ENCODE measurements at regions of chr17 and their contacts with region 1.

Region 1: GRCh38 chr17:44141717-44142285 is at the start of gene HROB:
- DNase-seq: peak; percentile 96 to 100 (median 98)
- ATAC-seq: peak; percentile 98
- H3K4me3 ChIP-seq: peak within 1 kb of the TSS; percentile 84
- H3K4me3 Mint-ChIP-seq: peak within 1 kb of the TSS; percentile 82 to 89 (median 84)
- H3K27ac ChIP-seq: peak within 1 kb of the TSS; percentile 84
- H3K27ac Mint-ChIP-seq: peak within 1 kb of the TSS; percentile 65 to 91 (median 87)
- H3K4me1 ChIP-seq: peaks cover 0 to 9% of the 10 kb centered on the region in 2 donors
- H3K4me1 Mint-ChIP-seq: peaks cover 0 to 32% (median 12%) of the 10 kb centered on the region in 7 donors
- H3K27me3 ChIP-seq: no peaks in the 10 kb centered on the region
- H3K27me3 Mint-ChIP-seq: peaks cover 0 to 5% (median 0%) of the 10 kb centered on the region in 5 donors
- total RNA-seq, gene HROB: 0.76 to 12.3 (median 2.1) TPM

Region 2: GRCh38 chr17:44006598-44007345 is 135.0 kb before region 1 on chr17:
- CTCF ChIA-PET with region 1: no interaction called
- POLR2A ChIA-PET with region 1: no interaction called
- intact Hi-C with region 1: loop called in 1 of 2 experiments (anchors 1 kb)
- DNase-seq: peak; percentile 77 to 95 (median 86)
- ATAC-seq: peak; percentile 96
- H3K4me3 ChIP-seq: peak overlapping the region; percentile 89
- H3K4me3 Mint-ChIP-seq: peak overlapping the region; percentile 86 to 94 (median 90)
- H3K27ac ChIP-seq: peak overlapping the region; percentile 60
- H3K27ac Mint-ChIP-seq: peak overlapping the region; percentile 44 to 88 (median 68)
- H3K4me1 ChIP-seq: peaks cover 19 to 26% of the 10 kb centered on the region in 2 donors
- H3K4me1 Mint-ChIP-seq: peaks cover 16 to 30% (median 25%) of the 10 kb centered on the region in 7 donors
- H3K27me3 ChIP-seq: no peaks in the 10 kb centered on the region
- H3K27me3 Mint-ChIP-seq: peaks cover 0 to 30% (median 4%) of the 10 kb centered on the region in 5 donors

Region 3: GRCh38 chr17:44070455-44071197 is 71.2 kb before region 1 on chr17 and contains the start of gene G6PC3:
- CTCF ChIA-PET with region 1: no interaction called
- POLR2A ChIA-PET with region 1: no interaction called
- intact Hi-C with region 1: loop called (anchors 1 kb)
- DNase-seq: peak; percentile 35 to 86 (median 49)
- ATAC-seq: peak; percentile 67
- H3K4me3 ChIP-seq: peak within 1 kb of the TSS; percentile 75
- H3K4me3 Mint-ChIP-seq: peak within 1 kb of the TSS; percentile 91 to 97 (median 94)
- H3K27ac ChIP-seq: peak within 1 kb of the TSS; percentile 83
- H3K27ac Mint-ChIP-seq: peak within 1 kb of the TSS; percentile 29 to 96 (median 93)
- H3K4me1 ChIP-seq: peaks cover 21 to 24% of the 10 kb centered on the region in 2 donors
- H3K4me1 Mint-ChIP-seq: peaks cover 31 to 49% (median 36%) of the 10 kb centered on the region in 7 donors
- H3K27me3 ChIP-seq: no peaks in the 10 kb centered on the region
- H3K27me3 Mint-ChIP-seq: no peaks in the 10 kb centered on the region
- total RNA-seq, gene G6PC3: 9.4 to 25.8 (median 13.9) TPM

Region 4: DNA sequence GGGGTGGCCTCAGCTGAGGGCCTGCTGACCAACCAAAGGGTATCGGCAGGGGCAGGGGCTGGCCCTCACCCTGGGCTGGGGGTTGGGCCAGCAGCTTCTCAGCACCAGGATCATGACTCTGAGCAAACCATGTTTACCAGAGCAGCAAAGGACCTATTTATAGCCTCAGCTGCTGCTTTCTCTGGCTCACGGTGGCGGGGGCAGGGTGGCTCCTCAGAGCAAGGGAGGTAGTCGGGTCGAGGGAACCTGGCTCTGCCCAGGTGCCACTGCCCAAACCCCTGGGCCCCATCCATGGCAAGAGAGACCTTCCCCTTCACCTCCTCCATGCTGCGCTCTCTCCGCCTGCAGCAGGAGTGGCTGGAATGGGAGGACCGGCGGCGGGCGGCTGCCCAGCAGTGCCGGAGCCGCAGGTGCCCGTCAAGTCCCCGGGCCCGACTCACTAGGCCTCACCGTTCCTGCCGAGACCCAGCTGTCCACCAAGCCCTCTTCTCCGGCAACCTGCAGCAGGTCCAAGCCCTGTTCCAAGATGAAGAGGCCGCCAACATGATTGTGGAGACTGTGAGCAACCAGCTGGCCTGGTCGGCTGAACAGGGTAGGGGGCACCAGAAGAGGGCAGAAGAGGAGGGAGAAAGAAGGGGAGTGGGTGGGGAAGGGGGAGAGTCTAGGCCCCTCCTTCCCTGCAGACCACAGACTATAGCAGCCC is 28.8 kb after region 1 on chr17 and contains the start of gene ASB16:
- CTCF ChIA-PET with region 1: interaction called, 5 read pairs
- POLR2A ChIA-PET with region 1: no interaction called
- intact Hi-C with region 1: loop called (anchors 1 kb)
- DNase-seq: no peak
- ATAC-seq: no peak
- H3K4me3 ChIP-seq: no peak within 1 kb of the TSS
- H3K4me3 Mint-ChIP-seq: no peak within 1 kb of the TSS
- H3K27ac ChIP-seq: no peak within 1 kb of the TSS
- H3K27ac Mint-ChIP-seq: peak within 1 kb of the TSS in 2 of 9 donors; percentile 46 to 76
- H3K4me1 ChIP-seq: peaks cover 0 to 4% of the 10 kb centered on the region in 2 donors
- H3K4me1 Mint-ChIP-seq: peaks cover 7 to 21% (median 14%) of the 10 kb centered on the region in 7 donors
- H3K27me3 ChIP-seq: no peaks in the 10 kb centered on the region
- H3K27me3 Mint-ChIP-seq: no peaks in the 10 kb centered on the region
- total RNA-seq, gene ASB16: 0.34 TPM in 1 of 5 experiments, not detected in the others

Region 5: DNA sequence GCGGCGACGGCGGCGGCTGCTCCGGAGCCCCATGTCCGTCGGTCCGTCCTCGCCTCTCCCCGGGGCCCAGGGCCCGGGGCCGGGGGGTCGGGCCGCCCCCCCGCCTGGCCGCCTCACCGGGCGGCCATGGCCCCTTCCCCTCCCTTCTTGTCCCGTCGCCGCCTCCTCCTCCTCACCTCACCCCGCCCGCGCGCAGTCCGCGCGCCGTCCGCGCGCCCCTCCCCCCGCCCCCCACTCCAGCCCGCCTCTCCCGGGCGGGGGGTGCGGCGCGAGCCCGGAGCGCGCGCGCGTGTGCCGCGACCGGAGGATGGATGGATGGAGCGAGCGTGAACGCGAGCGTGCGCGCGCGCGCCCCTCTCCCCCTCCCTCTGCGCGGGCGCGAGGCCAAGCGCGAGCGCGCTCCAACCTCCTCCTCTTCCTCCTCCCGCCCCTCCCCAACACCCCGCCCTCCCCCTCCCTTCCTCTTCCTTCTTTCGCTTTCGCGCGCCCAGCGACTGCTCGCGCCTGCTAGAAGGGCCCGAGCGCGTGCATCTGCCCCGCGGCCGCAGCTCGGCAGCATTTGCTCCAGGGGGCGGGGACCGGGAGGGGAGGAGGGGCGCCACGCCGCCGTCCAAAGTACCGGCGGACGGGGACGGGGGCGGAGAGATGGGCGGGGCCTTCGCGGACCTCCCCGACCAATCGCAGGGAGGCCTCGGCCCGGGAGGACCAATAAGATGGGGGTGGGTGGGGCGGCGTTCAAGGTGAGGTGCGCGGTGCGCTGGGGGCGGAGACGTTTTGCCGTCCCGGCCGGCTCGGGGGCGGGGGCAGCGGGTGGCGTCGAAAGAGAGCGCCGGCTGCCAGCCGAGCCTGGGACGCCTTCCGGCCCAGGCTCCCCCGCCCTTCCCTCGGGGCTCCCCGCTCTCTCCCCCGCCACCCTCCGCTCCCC is 58.0 kb after region 1 on chr17 and contains the start of gene ATXN7L3:
- CTCF ChIA-PET with region 1: no interaction called
- POLR2A ChIA-PET with region 1: interaction called, 5 read pairs
- intact Hi-C with region 1: loop called in 1 of 2 experiments (anchors 1 kb)
- DNase-seq: peak; percentile 90 to 99 (median 98)
- ATAC-seq: peak; percentile 91
- H3K4me3 ChIP-seq: peak within 1 kb of the TSS; percentile 68
- H3K4me3 Mint-ChIP-seq: peak within 1 kb of the TSS; percentile 90 to 97 (median 92)
- H3K27ac ChIP-seq: peak within 1 kb of the TSS; percentile 93
- H3K27ac Mint-ChIP-seq: peak within 1 kb of the TSS; percentile 91 to 97 (median 96)
- H3K4me1 ChIP-seq: peaks cover 27 to 34% of the 10 kb centered on the region in 2 donors
- H3K4me1 Mint-ChIP-seq: peaks cover 39 to 61% (median 53%) of the 10 kb centered on the region in 7 donors
- H3K27me3 ChIP-seq: no peaks in the 10 kb centered on the region
- H3K27me3 Mint-ChIP-seq: no peaks in the 10 kb centered on the region
- total RNA-seq, gene ATXN7L3: 93.5 to 130 (median 124) TPM

Region 6: DNA sequence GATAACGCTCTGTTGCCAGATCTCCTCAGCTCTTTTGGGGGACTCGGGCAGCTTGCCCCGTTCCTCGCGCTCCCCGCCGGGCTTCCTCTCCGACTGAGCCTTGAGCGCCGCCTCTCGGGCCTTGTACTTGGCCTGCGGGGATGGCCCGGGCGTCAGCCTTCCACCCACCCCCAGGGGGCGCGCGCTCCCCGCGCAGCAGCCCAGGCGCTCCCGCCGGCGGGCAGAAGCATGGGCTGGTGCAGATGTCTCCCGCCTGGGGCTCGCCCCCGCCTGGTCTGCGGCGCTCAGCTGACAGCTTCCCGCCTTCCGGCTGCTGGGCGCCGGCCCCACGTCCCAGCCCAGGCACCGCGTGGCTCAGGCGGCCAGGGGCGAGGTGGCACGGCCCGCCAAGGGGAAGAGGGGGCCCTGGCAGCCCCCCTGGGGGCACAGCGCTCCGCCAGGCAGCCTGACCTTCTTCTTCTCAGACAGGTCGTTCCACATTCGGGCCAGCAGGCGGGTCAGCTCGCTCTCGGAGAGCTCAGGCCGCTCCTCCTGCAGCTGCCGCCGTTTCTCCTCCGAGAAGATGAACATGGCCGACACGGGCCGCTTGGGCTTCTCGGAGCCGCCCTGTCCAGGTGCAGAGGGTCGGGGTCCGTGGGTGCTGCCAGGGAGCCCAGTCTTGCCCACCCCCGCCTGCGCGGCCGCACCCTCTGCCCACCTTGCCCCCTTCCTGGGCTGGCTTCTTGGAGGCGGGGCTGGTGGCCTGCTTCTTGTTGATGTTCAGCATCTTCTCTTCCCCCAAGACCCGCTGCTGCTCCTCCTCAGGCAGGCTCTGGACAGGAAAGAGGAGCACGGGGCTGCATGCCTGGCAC is 68.8 kb after region 1 on chr17:
- CTCF ChIA-PET with region 1: no interaction called
- POLR2A ChIA-PET with region 1: interaction called, 3 read pairs
- intact Hi-C with region 1: loop called in 1 of 2 experiments (anchors 1 kb)
- DNase-seq: peak; percentile 82 to 97 (median 93)
- ATAC-seq: peak; percentile 99
- H3K4me3 ChIP-seq: no peak overlapping the region
- H3K4me3 Mint-ChIP-seq: peak overlapping the region; percentile 16 to 77 (median 60)
- H3K27ac ChIP-seq: peak overlapping the region; percentile 68
- H3K27ac Mint-ChIP-seq: peak overlapping the region; percentile 52 to 90 (median 81)
- H3K4me1 ChIP-seq: peaks cover 25 to 47% of the 10 kb centered on the region in 2 donors
- H3K4me1 Mint-ChIP-seq: peaks cover 30 to 67% (median 50%) of the 10 kb centered on the region in 7 donors
- H3K27me3 ChIP-seq: no peaks in the 10 kb centered on the region
- H3K27me3 Mint-ChIP-seq: no peaks in the 10 kb centered on the region

Region 7: GRCh38 chr17:44331249-44331760 is 189.5 kb after region 1 on chr17:
- CTCF ChIA-PET with region 1: interaction called, 3 read pairs
- POLR2A ChIA-PET with region 1: no interaction called
- intact Hi-C with region 1: loop called in 1 of 2 experiments (anchors 1 kb)
- DNase-seq: peak in 8 of 9 donors; percentile 62 to 79 (median 71)
- ATAC-seq: peak; percentile 46
- H3K4me3 ChIP-seq: no peak overlapping the region
- H3K4me3 Mint-ChIP-seq: peak overlapping the region in 1 of 10 donors; percentile 24
- H3K27ac ChIP-seq: no peak overlapping the region
- H3K27ac Mint-ChIP-seq: peak overlapping the region in 3 of 9 donors; percentile 19 to 67 (median 43)
- H3K4me1 ChIP-seq: peaks cover 4 to 10% of the 10 kb centered on the region in 2 donors
- H3K4me1 Mint-ChIP-seq: peaks cover 0 to 18% (median 14%) of the 10 kb centered on the region in 7 donors
- H3K27me3 ChIP-seq: no peaks in the 10 kb centered on the region
- H3K27me3 Mint-ChIP-seq: peaks cover 0 to 2% (median 0%) of the 10 kb centered on the region in 5 donors